ENCODE measurements at regions of chr15 and their contacts with region 1.

Region 1: GRCh38 chr15:75684642-75685041 is 28.0 kb downstream of the CSPG4 start:
- DNase-seq: no peak
- H3K4me3 ChIP-seq: no peak overlapping the region
- H3K27me3 ChIP-seq: no peaks in the 10 kb centered on the region
- CTCF ChIP-seq: no peak

Region 2: DNA sequence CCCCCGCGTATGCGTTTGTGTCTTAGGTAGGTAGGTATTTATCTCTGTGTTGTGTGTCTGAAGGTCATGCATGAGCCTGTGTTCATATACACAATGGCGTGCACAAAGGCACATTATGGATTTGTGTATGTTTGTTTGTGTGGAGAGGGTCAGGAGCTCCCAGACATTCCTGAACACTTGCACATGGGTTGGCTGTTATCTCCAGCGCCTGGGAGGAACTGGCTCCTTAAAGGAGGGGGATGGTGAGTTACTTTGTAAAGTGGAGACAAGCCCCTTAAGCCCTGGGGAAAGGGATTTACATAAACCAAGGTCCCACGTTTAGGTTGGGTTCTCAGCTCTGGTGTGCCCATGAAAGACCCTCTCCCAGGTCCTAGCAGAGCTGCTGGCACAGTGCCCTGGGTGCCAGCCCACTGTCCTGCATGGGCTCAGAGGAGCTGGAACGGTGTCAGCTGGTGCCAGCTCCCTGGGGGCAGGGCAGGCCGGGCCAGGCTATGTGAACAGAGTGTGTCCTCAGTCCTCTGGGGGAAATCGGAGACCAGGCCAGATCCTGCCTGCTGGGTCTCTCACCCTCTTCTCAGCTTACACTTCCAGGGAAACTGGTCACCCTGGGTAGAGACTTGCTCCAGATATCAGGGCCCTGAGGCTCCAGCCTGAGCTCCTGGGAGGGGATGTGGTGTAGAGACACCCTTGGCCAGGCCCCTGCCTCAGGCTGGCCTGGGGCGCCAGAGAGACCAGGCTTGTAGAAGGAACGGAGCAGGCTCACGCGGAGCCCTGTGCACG is 11.8 kb before region 1 on chr15:
- CTCF ChIA-PET with region 1: interaction called, 17 read pairs
- POLR2A ChIA-PET with region 1: no interaction called
- DNase-seq: no peak
- H3K4me3 ChIP-seq: no peak overlapping the region
- H3K27me3 ChIP-seq: no peaks in the 10 kb centered on the region
- CTCF ChIP-seq: no peak

Region 3: GRCh38 chr15:75723847-75724660 is 39.4 kb after region 1 on chr15:
- CTCF ChIA-PET with region 1: interaction called, 11 read pairs
- POLR2A ChIA-PET with region 1: no interaction called
- DNase-seq: peak; percentile 74
- H3K4me3 ChIP-seq: no peak overlapping the region
- H3K27me3 ChIP-seq: no peaks in the 10 kb centered on the region
- CTCF ChIP-seq: no peak

Region 4: DNA sequence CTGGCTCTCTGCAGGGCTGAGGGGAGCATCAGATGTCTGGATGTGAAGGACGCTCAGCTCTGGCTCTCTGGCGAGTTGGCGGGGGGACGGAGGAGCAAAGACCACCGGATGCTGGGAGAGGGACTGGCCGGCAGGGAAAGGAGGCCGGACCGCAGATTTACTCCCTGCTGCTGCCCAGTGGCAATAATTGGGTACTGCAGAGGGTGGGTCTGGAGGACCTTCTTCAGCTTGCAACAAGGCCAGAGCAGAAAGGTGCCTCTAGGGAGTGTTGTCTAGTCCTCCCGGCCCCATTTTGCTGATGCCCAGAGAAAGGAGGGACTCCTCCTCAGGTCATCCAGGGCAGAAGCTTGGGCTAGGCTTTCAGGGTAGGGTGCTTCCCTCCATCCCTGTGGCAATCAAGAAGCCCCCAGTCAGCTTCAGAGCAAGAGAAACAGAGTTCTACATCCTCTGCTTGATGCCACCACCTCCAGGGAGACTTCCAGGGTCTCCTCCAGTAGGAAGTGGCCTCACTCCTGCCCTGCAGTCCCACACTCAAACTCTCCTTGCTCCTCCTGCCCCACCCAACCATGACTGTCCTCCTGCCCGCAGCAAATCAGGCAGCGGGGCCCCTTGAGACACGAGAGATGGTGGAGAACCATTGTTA is 48.3 kb after region 1 on chr15:
- CTCF ChIA-PET with region 1: interaction called, 23 read pairs
- POLR2A ChIA-PET with region 1: no interaction called
- DNase-seq: no peak
- H3K4me3 ChIP-seq: no peak overlapping the region
- H3K27me3 ChIP-seq: no peaks in the 10 kb centered on the region
- CTCF ChIP-seq: peak; percentile 90

Region 5: GRCh38 chr15:75884041-75884440 is 199.4 kb after region 1 on chr15:
- CTCF ChIA-PET with region 1: no interaction called
- POLR2A ChIA-PET with region 1: no interaction called
- DNase-seq: no peak
- H3K4me3 ChIP-seq: no peak overlapping the region
- H3K27me3 ChIP-seq: no peaks in the 10 kb centered on the region
- CTCF ChIP-seq: no peak

Region 6: GRCh38 chr15:75928680-75929608 is 244.3 kb after region 1 on chr15:
- CTCF ChIA-PET with region 1: no interaction called
- POLR2A ChIA-PET with region 1: no interaction called
- DNase-seq: no peak
- H3K4me3 ChIP-seq: no peak overlapping the region
- H3K27me3 ChIP-seq: no peaks in the 10 kb centered on the region
- CTCF ChIP-seq: peak; percentile 52

Measured in BJ (cell line).